Heart left ventricle (tissue), 16 donors: ENCODE measurements at regions of chr17 and their contacts with region 1.

Region 1: DNA sequence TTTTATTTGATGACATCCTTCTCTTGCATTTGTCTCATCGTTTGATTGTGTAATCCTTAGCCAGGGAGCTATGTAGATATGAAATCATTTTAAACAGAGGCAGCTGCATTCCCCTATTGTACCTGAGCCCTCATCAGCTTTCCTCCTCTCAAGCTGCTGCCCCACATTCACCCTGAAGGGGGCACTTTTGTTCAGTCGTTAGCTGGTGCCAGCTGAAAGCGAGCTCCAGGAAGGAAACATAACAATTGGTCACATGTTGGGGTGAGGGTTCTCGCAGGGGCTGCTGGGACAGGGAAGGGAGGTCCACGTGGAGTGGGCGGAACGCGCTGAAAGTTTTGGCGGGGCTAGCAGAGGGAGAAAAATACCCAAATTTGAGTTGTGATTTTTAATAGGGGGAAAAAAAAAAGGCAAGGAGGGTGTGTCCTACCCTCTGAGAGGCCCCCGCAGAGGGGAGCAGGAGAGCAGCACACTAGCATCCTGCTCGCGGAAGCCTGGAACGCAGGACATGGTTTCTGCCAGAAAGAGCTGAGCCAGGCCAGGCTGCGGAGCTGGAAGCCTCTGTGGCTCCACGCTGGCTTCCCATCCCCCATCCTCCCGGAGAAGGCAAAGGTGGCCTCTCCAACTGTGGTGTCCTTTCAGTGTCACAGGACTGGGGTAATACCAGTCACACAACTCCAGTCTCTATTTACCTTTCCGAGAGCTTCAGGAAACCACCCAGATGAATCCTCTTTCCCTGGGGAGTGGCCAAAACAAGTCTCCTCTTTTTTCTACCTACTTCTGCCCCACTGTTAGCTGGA is 8.5 kb upstream of the MSL1 start:
- DNase-seq: peak; percentile 91 to 94 (median 93)
- ATAC-seq: peak; percentile 71 to 83 (median 74)
- H3K4me3 ChIP-seq: peak overlapping the region in 11 of 12 donors; percentile 27 to 61 (median 47)
- H3K27ac ChIP-seq: peak overlapping the region; percentile 72 to 100 (median 95)
- H3K4me1 ChIP-seq: peaks cover 29 to 61% (median 56%) of the 10 kb centered on the region in 12 donors
- H3K27me3 ChIP-seq: no peaks in the 10 kb centered on the region
- CTCF ChIP-seq: peak; percentile 71 to 96 (median 84)
- POLR2A ChIP-seq: no peak

Region 2: GRCh38 chr17:40019140-40019991 is 93.9 kb before region 1 on chr17:
- intact Hi-C with region 1: loop called in 1 of 10 experiments (anchors 10 kb)
- DNase-seq: no peak
- ATAC-seq: peak in 1 of 4 donors; percentile 53
- H3K4me3 ChIP-seq: no peak overlapping the region
- H3K27ac ChIP-seq: peak overlapping the region in 5 of 12 donors; percentile 13 to 67 (median 33)
- H3K4me1 ChIP-seq: peaks cover 0 to 70% (median 30%) of the 10 kb centered on the region in 12 donors
- H3K27me3 ChIP-seq: no peaks in the 10 kb centered on the region
- CTCF ChIP-seq: no peak
- POLR2A ChIP-seq: no peak

Region 3: GRCh38 chr17:40062329-40063186 is 50.8 kb before region 1 on chr17 and contains the start of gene THRA:
- intact Hi-C with region 1: loop called in 9 of 10 experiments (anchors 2 to 5 kb)
- DNase-seq: peak; percentile 74 to 89 (median 86)
- ATAC-seq: peak; percentile 19 to 82 (median 74)
- H3K4me3 ChIP-seq: peak within 1 kb of the TSS; percentile 78 to 100 (median 96)
- H3K27ac ChIP-seq: peak within 1 kb of the TSS; percentile 95 to 100 (median 98)
- H3K4me1 ChIP-seq: peaks cover 3 to 61% (median 48%) of the 10 kb centered on the region in 12 donors
- H3K27me3 ChIP-seq: no peaks in the 10 kb centered on the region
- CTCF ChIP-seq: peak in 3 of 12 donors; percentile 17 to 30 (median 30)
- POLR2A ChIP-seq: no peak
- total RNA-seq, gene THRA: 63.2 to 105 (median 73.2) TPM

Region 4: GRCh38 chr17:40086150-40087044 is 26.9 kb before region 1 on chr17:
- intact Hi-C with region 1: loop called in 1 of 10 experiments (anchors 2 kb)
- DNase-seq: peak in 4 of 5 donors; percentile 59 to 82 (median 69)
- ATAC-seq: peak in 3 of 4 donors; percentile 7 to 38 (median 35)
- H3K4me3 ChIP-seq: no peak overlapping the region
- H3K27ac ChIP-seq: peak overlapping the region in 4 of 12 donors; percentile 4 to 66 (median 23)
- H3K4me1 ChIP-seq: peaks cover 0 to 31% (median 16%) of the 10 kb centered on the region in 12 donors
- H3K27me3 ChIP-seq: no peaks in the 10 kb centered on the region
- CTCF ChIP-seq: peak; percentile 75 to 91 (median 86)
- POLR2A ChIP-seq: no peak

Region 5: GRCh38 chr17:40130352-40131042 is 17.2 kb after region 1 on chr17:
- intact Hi-C with region 1: no loop called
- DNase-seq: peak in 2 of 5 donors; percentile 18 to 32
- ATAC-seq: peak in 3 of 4 donors; percentile 50 to 70 (median 58)
- H3K4me3 ChIP-seq: no peak overlapping the region
- H3K27ac ChIP-seq: peak overlapping the region in 2 of 12 donors; percentile 44 to 63
- H3K4me1 ChIP-seq: peaks cover 0 to 16% (median under 1%) of the 10 kb centered on the region in 12 donors
- H3K27me3 ChIP-seq: no peaks in the 10 kb centered on the region
- CTCF ChIP-seq: no peak
- POLR2A ChIP-seq: no peak

Region 6: DNA sequence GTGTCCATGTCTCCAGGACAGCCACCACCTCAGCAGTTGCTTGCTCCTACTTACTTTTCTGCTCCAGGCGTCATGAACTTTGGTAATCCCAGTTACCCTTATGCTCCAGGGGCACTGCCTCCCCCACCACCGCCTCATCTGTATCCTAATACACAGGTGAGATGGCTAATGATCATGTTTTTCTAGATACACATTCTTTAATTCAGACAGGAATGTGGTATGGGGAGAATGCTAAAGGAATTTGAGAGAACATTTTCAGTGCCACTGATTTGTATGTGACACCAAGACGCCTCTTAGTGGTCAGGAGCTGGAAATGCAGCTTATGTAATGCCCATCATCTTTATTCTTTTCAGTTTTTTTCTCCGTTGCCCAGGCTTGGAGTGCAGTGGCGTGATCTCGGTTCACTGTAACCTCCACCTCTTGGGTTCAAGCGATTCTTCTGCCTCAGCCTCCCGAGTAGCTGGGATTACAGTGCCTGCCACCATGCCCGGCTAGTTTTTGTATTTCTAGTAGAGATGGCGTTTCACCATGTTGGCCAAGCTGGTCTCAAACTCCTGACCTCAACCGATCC is 55.0 kb after region 1 on chr17:
- intact Hi-C with region 1: loop called in 9 of 10 experiments (anchors 1 to 10 kb)
- DNase-seq: peak in 1 of 5 donors; percentile 32
- ATAC-seq: peak; percentile 32 to 69 (median 59)
- H3K4me3 ChIP-seq: no peak overlapping the region
- H3K27ac ChIP-seq: peak overlapping the region in 7 of 12 donors; percentile 8 to 63 (median 23)
- H3K4me1 ChIP-seq: peaks cover 0 to 9% (median 4%) of the 10 kb centered on the region in 12 donors
- H3K27me3 ChIP-seq: no peaks in the 10 kb centered on the region
- CTCF ChIP-seq: peak; percentile 67 to 86 (median 80)
- POLR2A ChIP-seq: no peak

Region 7: GRCh38 chr17:40264458-40265185 is 151.3 kb after region 1 on chr17:
- intact Hi-C with region 1: no loop called
- DNase-seq: no peak
- ATAC-seq: no peak
- H3K4me3 ChIP-seq: no peak overlapping the region
- H3K27ac ChIP-seq: no peak overlapping the region
- H3K4me1 ChIP-seq: peaks cover 0 to 8% (median 0%) of the 10 kb centered on the region in 12 donors
- H3K27me3 ChIP-seq: no peaks in the 10 kb centered on the region
- CTCF ChIP-seq: no peak
- POLR2A ChIP-seq: no peak

Region 8: DNA sequence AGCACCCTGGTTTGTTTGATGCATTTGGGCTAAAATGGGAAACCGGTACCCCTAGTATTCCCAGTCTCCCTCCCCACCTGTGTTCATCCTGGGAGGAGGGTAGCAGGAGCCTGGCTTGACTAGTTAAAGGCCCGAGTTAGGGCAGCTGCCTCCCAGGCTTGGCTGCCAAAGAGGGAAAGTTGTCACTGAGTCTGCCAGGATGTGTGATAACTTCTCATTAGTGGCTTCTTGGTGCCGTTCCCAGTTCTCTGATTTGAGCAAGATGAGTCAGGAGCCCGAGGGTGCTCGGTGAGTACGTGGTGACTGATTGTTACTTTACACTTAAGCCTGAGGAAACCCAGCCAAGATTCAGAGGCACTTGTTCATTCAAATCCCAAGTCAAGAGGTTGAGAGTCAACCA is 1351.4 kb after region 1 on chr17:
- intact Hi-C with region 1: no loop called
- DNase-seq: peak in 4 of 5 donors; percentile 68 to 85 (median 78)
- ATAC-seq: peak; percentile 96 to 98 (median 97)
- H3K4me3 ChIP-seq: no peak overlapping the region
- H3K27ac ChIP-seq: no peak overlapping the region
- H3K4me1 ChIP-seq: peaks cover 0 to 11% (median 3%) of the 10 kb centered on the region in 12 donors
- H3K27me3 ChIP-seq: peaks cover 0 to 8% (median 0%) of the 10 kb centered on the region in 9 donors
- CTCF ChIP-seq: no peak
- POLR2A ChIP-seq: no peak